Activated CD4-positive, alpha-beta T cell treated with anti-CD3 and anti-CD28 coated beads, Interleukin-2, amount 10 ng/mL, durations not matched to agents 24 days and 14 days (primary cell): ENCODE measurements at regions of chr2 and their contacts with region 1.

Region 1: DNA sequence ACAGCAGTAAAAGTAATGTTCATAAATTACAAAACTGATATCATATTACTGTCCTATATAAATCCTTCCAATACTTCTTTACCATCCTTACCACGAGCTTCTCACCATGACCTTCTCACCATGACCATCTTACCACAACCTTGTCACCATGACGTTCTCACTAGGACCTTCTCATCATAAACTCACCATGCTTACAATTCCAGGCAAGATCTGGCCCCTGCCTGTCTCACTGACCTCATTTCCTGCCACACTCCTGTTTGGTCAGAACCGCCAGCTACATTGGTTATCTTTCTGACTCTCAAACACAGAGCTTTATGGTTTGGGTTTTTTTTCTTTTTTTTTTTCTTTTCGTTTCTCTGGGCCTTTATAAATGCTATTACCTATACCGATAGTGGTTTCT is 827.6 kb downstream of the RNF144A start:
- DNase-seq: peak; percentile 76
- H3K4me3 Mint-ChIP-seq: no peak overlapping the region
- H3K27ac Mint-ChIP-seq: peak overlapping the region; percentile 34
- H3K4me1 Mint-ChIP-seq: peaks cover 22% of the 10 kb centered on the region
- H3K27me3 Mint-ChIP-seq: no peaks in the 10 kb centered on the region

Region 2: DNA sequence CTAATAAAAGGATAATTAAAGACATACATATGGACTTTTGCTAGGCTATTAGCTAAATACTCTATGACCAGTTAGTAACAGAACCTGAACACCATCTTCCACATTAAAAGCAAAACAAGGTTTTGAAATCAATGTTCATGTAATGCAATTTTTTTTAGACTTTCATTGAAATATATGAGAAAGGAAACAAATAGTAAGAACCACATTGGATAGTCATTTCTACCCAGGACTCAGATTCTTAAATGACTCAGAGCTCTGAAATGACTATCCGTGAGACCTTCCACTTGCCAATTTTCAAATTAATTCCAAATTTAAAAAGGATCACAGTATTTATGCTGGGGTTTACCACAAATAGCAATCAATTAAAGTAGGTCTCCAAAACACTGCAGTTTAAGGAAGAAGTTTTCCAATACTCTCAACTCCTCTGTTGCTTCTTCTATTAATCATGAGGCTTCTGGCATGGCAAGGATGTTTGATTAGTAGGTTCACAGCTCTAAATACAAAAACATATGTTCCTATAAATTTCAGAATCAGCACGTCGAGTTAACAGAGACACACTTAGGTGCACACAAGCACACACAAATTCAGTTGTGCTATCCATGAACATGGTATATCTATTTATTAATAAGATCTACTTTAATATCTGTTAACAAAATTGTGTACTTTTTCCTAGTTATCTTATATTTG is 13.4 kb after region 1 on chr2:
- intact Hi-C with region 1: loop called (anchors 2 kb)
- DNase-seq: peak; percentile 43
- H3K4me3 Mint-ChIP-seq: peak overlapping the region; percentile 15
- H3K27ac Mint-ChIP-seq: peak overlapping the region; percentile 82
- H3K4me1 Mint-ChIP-seq: peaks cover 16% of the 10 kb centered on the region
- H3K27me3 Mint-ChIP-seq: no peaks in the 10 kb centered on the region